ENCODE measurements at regions of chr1 and their contacts with region 1.

Region 1: GRCh38 chr1:167270349-167271092 is 49.8 kb downstream of the POU2F1 start:
- DNase-seq: no peak
- ATAC-seq: no peak
- H3K4me3 Mint-ChIP-seq: no peak overlapping the region
- H3K27ac Mint-ChIP-seq: no peak overlapping the region
- H3K4me1 Mint-ChIP-seq: peaks cover 41% of the 10 kb centered on the region
- H3K27me3 Mint-ChIP-seq: no peaks in the 10 kb centered on the region

Region 2: GRCh38 chr1:166988976-166989567 is 281.4 kb before region 1 on chr1 and contains the start of gene MAEL:
- CTCF ChIA-PET with region 1: no interaction called
- POLR2A ChIA-PET with region 1: no interaction called
- intact Hi-C with region 1: no loop called
- DNase-seq: no peak
- ATAC-seq: no peak
- H3K4me3 Mint-ChIP-seq: no peak within 1 kb of the TSS
- H3K27ac Mint-ChIP-seq: no peak within 1 kb of the TSS
- H3K4me1 Mint-ChIP-seq: no peaks in the 10 kb centered on the region
- H3K27me3 Mint-ChIP-seq: peaks cover 14% of the 10 kb centered on the region
- total RNA-seq, gene MAEL: 0.11 TPM in 1 of 2 experiments, not detected in the other

Region 3: GRCh38 chr1:167066333-167067122 is 204.0 kb before region 1 on chr1:
- CTCF ChIA-PET with region 1: no interaction called
- POLR2A ChIA-PET with region 1: no interaction called
- intact Hi-C with region 1: loop called in 1 of 2 experiments (anchors 2 kb)
- DNase-seq: peak; percentile 87
- ATAC-seq: peak; percentile 95
- H3K4me3 Mint-ChIP-seq: no peak overlapping the region
- H3K27ac Mint-ChIP-seq: no peak overlapping the region
- H3K4me1 Mint-ChIP-seq: no peaks in the 10 kb centered on the region
- H3K27me3 Mint-ChIP-seq: no peaks in the 10 kb centered on the region

Region 4: GRCh38 chr1:167121375-167122120 is 149.0 kb before region 1 on chr1:
- CTCF ChIA-PET with region 1: no interaction called
- POLR2A ChIA-PET with region 1: no interaction called
- intact Hi-C with region 1: no loop called
- DNase-seq: peak; percentile 56
- ATAC-seq: peak; percentile 64
- H3K4me3 Mint-ChIP-seq: peak overlapping the region; percentile 65
- H3K27ac Mint-ChIP-seq: peak overlapping the region; percentile 66
- H3K4me1 Mint-ChIP-seq: no peaks in the 10 kb centered on the region
- H3K27me3 Mint-ChIP-seq: no peaks in the 10 kb centered on the region

Region 5: DNA sequence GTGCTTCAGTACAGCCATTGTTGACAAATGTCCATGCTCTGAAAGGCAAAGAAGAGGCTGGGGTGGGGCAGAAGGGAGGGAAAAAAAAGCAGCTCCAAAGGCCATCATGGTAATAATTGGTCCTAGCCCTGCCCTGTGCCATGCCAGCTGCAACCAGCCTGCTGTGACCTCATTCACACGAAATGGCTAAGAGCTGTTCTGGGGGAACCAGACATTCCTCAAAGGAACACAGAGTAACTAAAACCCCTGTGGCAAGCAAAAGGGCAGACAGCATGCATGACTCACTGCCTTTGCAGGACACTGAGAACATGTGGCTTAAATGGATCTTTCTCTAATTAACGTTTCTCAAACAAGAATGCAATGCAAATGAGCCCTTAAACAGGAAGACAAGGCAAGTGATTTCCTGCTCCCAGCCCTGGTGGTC is 134.3 kb before region 1 on chr1:
- CTCF ChIA-PET with region 1: no interaction called
- POLR2A ChIA-PET with region 1: no interaction called
- intact Hi-C with region 1: no loop called
- DNase-seq: no peak
- ATAC-seq: no peak
- H3K4me3 Mint-ChIP-seq: no peak overlapping the region
- H3K27ac Mint-ChIP-seq: no peak overlapping the region
- H3K4me1 Mint-ChIP-seq: no peaks in the 10 kb centered on the region
- H3K27me3 Mint-ChIP-seq: peaks cover 4% of the 10 kb centered on the region

Region 6: GRCh38 chr1:167258858-167259257 is 11.7 kb before region 1 on chr1:
- CTCF ChIA-PET with region 1: interaction called, 20 read pairs
- POLR2A ChIA-PET with region 1: interaction called, 5 read pairs
- intact Hi-C with region 1: no loop called
- DNase-seq: no peak
- ATAC-seq: no peak
- H3K4me3 Mint-ChIP-seq: no peak overlapping the region
- H3K27ac Mint-ChIP-seq: no peak overlapping the region
- H3K4me1 Mint-ChIP-seq: peaks cover 38% of the 10 kb centered on the region
- H3K27me3 Mint-ChIP-seq: no peaks in the 10 kb centered on the region

Region 7: DNA sequence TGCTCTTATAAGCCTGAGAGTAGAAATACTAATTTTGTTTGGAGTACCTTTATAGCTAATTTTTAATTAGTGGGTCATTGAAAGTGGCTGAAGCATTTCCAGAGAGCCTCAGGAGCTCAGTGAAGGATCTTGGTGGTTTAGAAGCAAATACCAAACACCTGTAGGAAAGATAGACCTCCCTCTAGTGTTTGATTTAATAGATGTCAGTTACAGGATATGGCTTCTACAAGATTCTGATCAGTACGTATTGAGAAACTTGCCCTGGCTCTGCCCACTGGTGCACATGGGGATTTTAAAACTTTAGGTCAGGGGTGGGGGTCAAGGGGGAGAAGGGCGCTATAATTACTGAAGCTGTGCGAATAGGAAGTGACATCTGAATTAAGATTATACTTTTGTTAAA is 72.3 kb after region 1 on chr1:
- CTCF ChIA-PET with region 1: interaction called, 5 read pairs
- POLR2A ChIA-PET with region 1: no interaction called
- intact Hi-C with region 1: loop called (anchors 5 kb)
- DNase-seq: no peak
- ATAC-seq: peak; percentile 39
- H3K4me3 Mint-ChIP-seq: no peak overlapping the region
- H3K27ac Mint-ChIP-seq: no peak overlapping the region
- H3K4me1 Mint-ChIP-seq: peaks cover 4% of the 10 kb centered on the region
- H3K27me3 Mint-ChIP-seq: no peaks in the 10 kb centered on the region

Region 8: DNA sequence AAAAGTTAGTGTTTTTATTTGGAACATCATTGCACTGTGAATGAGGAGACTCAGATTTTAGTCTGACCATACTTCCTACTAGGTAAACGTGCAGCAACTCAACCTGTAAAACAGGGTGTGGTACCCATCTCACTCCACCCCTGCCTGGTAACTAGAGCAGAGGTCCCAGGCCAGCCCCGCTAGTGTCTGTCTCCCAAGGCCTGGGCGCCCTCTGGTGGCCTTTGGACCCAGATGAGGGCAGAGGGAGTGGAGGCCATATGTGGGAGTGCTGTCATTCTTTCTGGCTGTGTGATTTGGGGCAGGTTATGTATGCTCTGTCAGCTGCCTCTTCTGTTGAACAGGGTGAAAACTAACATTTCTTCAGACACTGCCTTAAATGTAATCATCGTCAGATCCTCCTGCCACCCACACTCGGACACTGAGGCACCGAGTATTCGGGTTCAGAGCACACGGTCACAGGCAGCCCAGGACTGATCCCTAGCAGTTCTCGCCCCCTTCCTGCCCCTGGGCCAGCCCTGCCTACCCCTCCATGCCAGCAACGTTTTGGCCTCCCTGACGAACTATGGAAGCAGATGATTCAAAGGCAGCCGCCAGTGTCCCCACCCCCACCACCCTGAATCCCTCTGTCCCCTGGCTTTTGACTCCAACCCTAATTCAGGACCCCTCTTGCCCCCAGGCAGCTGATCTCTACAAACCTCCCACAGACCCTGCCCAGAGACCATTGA is 171.8 kb after region 1 on chr1:
- CTCF ChIA-PET with region 1: interaction called, 41 read pairs
- POLR2A ChIA-PET with region 1: no interaction called
- intact Hi-C with region 1: loop called (anchors 1 kb)
- DNase-seq: peak; percentile 94
- ATAC-seq: peak; percentile 80
- H3K4me3 Mint-ChIP-seq: no peak overlapping the region
- H3K27ac Mint-ChIP-seq: peak overlapping the region; percentile 68
- H3K4me1 Mint-ChIP-seq: peaks cover 84% of the 10 kb centered on the region
- H3K27me3 Mint-ChIP-seq: no peaks in the 10 kb centered on the region

Region 9: GRCh38 chr1:167542109-167543032 is 271.9 kb after region 1 on chr1:
- CTCF ChIA-PET with region 1: interaction called, 19 read pairs
- POLR2A ChIA-PET with region 1: no interaction called
- intact Hi-C with region 1: no loop called
- DNase-seq: no peak
- ATAC-seq: peak; percentile 64
- H3K4me3 Mint-ChIP-seq: no peak overlapping the region
- H3K27ac Mint-ChIP-seq: peak overlapping the region; percentile 10
- H3K4me1 Mint-ChIP-seq: peaks cover 37% of the 10 kb centered on the region
- H3K27me3 Mint-ChIP-seq: no peaks in the 10 kb centered on the region

Measured in activated CD4-positive, alpha-beta T cell treated with anti-CD3 and anti-CD28 coated beads for 36 hours (primary cell).